GM12878 (cell line): ENCODE measurements at regions of chr9 and their contacts with region 1.

Region 1: GRCh38 chr9:129884220-129885017 is 49.2 kb downstream of the USP20 start:
- DNase-seq: peak; percentile 83
- ATAC-seq: peak; percentile 64
- H3K4me3 ChIP-seq: peak overlapping the region; percentile 74
- H3K27ac ChIP-seq: peak overlapping the region; percentile 96
- H3K4me1 ChIP-seq: peaks cover 50% of the 10 kb centered on the region
- H3K27me3 ChIP-seq: no peaks in the 10 kb centered on the region
- CTCF ChIP-seq: 0 out of 6 replicates have a peak, but pooled peaks of 1 of the 3 experiments have one; percentile 2
- EP300 ChIP-seq: no peak
- POLR2A ChIP-seq: peak; percentile 67; the same call in 1 of the 2 replicates
- RAD21 ChIP-seq: no peak

Region 2: GRCh38 chr9:129835021-129835871 is 49.2 kb before region 1 on chr9 and contains the starts of genes C9orf78 and USP20:
- CTCF ChIA-PET with region 1: no interaction called
- POLR2A ChIA-PET with region 1: interaction called, 3 read pairs
- RAD21 ChIA-PET with region 1: interaction called, 3 read pairs
- SMC1A ChIA-PET with region 1: interaction called, 8 read pairs
- in situ Hi-C with region 1: no loop called
- intact Hi-C with region 1: loop called (anchors 1 kb)
- DNase-seq: peak; percentile 86
- ATAC-seq: peak; percentile 97
- H3K4me3 ChIP-seq: peak within 1 kb of the TSS; percentile 96
- H3K27ac ChIP-seq: peak within 1 kb of the TSS; percentile 74
- H3K4me1 ChIP-seq: peaks cover 14% of the 10 kb centered on the region
- H3K27me3 ChIP-seq: no peaks in the 10 kb centered on the region
- CTCF ChIP-seq: no peak
- EP300 ChIP-seq: no peak
- POLR2A ChIP-seq: peak; percentile 95
- RAD21 ChIP-seq: no peak
- polyA plus RNA-seq, gene C9orf78: 28.6 to 60.9 TPM
- polyA plus RNA-seq, gene USP20: 0.66 to 1.1 TPM

Region 3: DNA sequence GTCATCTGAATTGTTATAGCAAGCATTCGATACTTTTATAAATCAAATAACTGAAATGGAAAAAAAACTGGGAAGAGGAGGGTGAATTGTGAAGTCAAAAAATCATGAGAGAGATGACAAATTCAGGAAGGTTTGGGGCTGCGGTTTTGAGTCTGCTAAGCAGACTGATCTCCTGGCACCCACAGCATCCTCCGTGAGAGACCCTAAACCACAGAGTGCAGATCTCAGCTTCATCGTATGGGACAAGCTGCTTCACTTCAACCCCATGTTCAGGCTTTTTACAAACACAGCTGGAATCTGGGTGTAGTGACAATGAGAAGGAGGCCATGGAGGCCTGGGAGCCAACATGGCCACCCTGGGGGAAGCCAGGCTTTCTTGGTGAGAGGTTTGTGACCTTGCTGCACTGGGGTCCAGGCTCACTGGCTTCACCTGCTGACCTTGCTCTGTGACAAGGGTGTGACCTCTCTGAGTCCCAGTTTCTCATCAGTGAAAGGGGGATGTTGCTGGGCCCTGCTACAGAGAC is 29.8 kb before region 1 on chr9:
- CTCF ChIA-PET with region 1: no interaction called
- POLR2A ChIA-PET with region 1: no interaction called
- RAD21 ChIA-PET with region 1: no interaction called
- SMC1A ChIA-PET with region 1: no interaction called
- in situ Hi-C with region 1: no loop called
- intact Hi-C with region 1: no loop called
- DNase-seq: no peak
- ATAC-seq: no peak
- H3K4me3 ChIP-seq: no peak overlapping the region
- H3K27ac ChIP-seq: no peak overlapping the region
- H3K4me1 ChIP-seq: no peaks in the 10 kb centered on the region
- H3K27me3 ChIP-seq: no peaks in the 10 kb centered on the region
- CTCF ChIP-seq: no peak
- EP300 ChIP-seq: no peak
- POLR2A ChIP-seq: no peak
- RAD21 ChIP-seq: no peak

Region 4: DNA sequence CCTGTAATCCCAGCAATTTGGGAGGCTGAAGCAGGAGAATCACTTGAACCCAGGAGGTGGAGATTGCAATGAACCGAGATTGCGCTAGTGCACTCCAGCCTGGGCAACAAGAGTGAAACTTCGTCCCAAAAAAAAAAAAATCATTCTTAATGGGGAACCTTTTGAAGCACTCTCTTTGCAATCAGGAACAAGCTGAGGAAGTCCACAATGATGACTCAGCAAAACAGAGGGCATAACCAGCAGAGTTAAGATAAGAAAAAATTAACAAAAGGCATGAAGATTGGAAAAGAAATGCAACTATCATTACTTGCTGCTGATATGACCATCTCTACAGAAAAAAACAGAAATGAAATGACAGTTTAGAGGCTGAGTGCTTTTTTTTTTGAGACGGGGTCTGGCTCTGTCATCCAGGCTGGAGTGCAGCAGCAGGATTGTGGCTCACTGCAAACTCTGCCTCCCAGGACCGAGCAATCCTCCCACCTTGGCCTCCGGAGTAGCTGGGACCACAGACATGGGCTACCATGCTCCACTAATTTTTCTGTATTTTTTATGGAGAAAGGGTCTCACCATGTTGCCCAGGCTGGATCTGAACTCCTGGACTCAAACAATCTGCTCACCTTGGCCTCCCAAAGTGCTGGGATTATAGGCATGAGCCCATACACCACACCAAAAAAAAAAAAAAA is 70.6 kb after region 1 on chr9:
- CTCF ChIA-PET with region 1: interaction called, 4 read pairs
- POLR2A ChIA-PET with region 1: interaction called, 16 read pairs
- RAD21 ChIA-PET with region 1: interaction called, 11 read pairs
- SMC1A ChIA-PET with region 1: interaction called, 29 read pairs
- in situ Hi-C with region 1: no loop called
- intact Hi-C with region 1: loop called (anchors 2 kb)
- DNase-seq: no peak
- ATAC-seq: no peak
- H3K4me3 ChIP-seq: no peak overlapping the region
- H3K27ac ChIP-seq: peak overlapping the region; percentile 39
- H3K4me1 ChIP-seq: peaks cover 42% of the 10 kb centered on the region
- H3K27me3 ChIP-seq: no peaks in the 10 kb centered on the region
- CTCF ChIP-seq: no peak
- EP300 ChIP-seq: no peak
- POLR2A ChIP-seq: no peak
- RAD21 ChIP-seq: no peak

Region 5: DNA sequence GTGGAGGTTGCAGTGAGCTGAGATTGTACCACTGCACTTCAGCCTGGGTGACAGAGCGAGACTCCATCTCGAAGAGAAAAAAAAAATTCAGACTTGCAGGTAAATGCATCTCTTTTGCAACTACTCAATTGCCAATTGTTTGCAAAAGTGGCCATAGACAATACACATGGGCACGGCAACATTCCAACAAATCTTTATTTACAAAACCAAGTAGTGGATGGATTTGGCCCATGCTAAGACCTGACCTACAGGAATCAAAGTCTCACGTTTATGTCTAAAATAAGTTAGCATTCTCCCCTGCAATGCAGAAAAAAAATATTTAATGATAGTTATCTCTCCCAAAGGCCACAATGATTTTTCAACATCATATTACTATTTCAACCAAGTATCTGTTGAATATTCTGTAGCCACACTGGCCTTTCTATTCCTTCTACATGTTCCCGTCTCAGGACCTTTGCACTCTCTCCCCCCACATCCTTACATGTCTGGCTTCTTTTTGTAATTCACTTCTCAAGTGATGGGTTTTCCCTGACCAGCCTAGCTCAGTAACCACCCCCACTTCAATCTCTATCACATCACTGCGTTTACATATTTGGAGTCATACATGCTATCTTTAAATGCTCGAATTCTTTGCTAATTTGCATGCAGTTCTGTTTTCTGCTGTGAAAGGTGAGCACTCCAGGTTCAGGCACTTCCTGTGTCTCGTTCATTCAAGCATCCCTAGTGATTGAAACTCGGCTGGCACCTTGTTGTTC is 104.4 kb after region 1 on chr9:
- CTCF ChIA-PET with region 1: interaction called, 4 read pairs
- POLR2A ChIA-PET with region 1: interaction called, 79 read pairs
- RAD21 ChIA-PET with region 1: interaction called, 89 read pairs
- SMC1A ChIA-PET with region 1: interaction called, 42 read pairs
- in situ Hi-C with region 1: loop called (anchors 5 kb)
- intact Hi-C with region 1: loop called (anchors 1 kb)
- DNase-seq: peak; percentile 99
- ATAC-seq: peak; percentile 65
- H3K4me3 ChIP-seq: peak overlapping the region; percentile 33
- H3K27ac ChIP-seq: peak overlapping the region; percentile 100
- H3K4me1 ChIP-seq: peaks cover 62% of the 10 kb centered on the region
- H3K27me3 ChIP-seq: no peaks in the 10 kb centered on the region
- CTCF ChIP-seq: no peak
- EP300 ChIP-seq: peak; percentile 74 to 96; a peak in 3 of 4 replicates
- POLR2A ChIP-seq: peak; percentile 70
- RAD21 ChIP-seq: peak; percentile 8; the same call in 1 of the 2 replicates

Region 6: GRCh38 chr9:130010151-130010988 is 126.0 kb after region 1 on chr9:
- CTCF ChIA-PET with region 1: interaction called, 8 read pairs
- POLR2A ChIA-PET with region 1: interaction called, 4 read pairs
- RAD21 ChIA-PET with region 1: interaction called, 4 read pairs
- SMC1A ChIA-PET with region 1: interaction called, 3 read pairs
- in situ Hi-C with region 1: no loop called
- intact Hi-C with region 1: loop called (anchors 5 kb)
- DNase-seq: no peak
- ATAC-seq: peak; percentile 59
- H3K4me3 ChIP-seq: peak overlapping the region; percentile 42; the same call in 1 of the 2 replicates
- H3K27ac ChIP-seq: peak overlapping the region; percentile 99
- H3K4me1 ChIP-seq: peaks cover 77% of the 10 kb centered on the region
- H3K27me3 ChIP-seq: no peaks in the 10 kb centered on the region
- CTCF ChIP-seq: no peak
- EP300 ChIP-seq: peak; percentile 77 to 95
- POLR2A ChIP-seq: peak; percentile 61
- RAD21 ChIP-seq: no peak